ENCODE measurements at regions of chr15 and their contacts with region 1.

Region 1: DNA sequence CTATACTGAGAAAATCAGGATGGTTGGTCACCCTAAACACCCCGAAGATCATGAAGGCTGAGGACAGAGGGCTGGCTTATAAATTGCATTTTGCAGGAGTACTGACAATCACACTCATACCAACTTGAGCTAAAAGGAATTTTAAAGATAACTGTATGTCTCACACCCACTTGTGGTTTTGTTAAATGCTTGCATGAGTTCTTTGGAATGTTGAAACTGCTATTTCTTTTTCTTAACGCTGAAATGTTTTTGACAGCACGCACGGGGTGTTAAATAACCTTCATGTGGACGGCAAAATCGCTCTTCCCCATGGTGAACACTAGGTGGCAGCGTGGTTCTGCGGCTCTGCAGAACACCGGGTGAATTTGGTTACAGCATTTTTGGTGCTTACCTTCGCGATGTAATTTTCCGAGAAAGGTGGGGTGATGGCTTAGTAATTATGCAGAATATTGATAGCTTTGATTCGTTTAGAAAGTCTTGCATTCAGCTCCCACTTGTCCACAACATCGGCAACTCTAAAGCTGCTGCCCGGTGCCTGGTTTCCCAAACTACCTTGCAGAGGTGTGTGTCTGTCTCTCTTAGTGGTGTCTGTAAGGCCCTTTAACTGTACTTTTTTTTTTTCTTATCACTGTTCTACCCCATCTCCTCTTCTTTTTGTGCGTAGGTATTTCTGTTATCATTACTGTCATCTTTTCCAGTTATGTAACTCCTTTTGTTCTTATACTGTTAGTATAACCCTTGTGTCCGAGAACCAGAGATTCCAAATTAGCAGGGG is 51.7 kb downstream of the ARNT2 start:
- DNase-seq: peak in 3 of 10 donors; percentile 65 to 73 (median 71)
- H3K4me3 ChIP-seq: peak overlapping the region in 14 of 59 donors; percentile 0 to 34 (median 18)
- H3K27ac ChIP-seq: peak overlapping the region in 51 of 59 donors; percentile 7 to 84 (median 51)
- H3K27me3 ChIP-seq: no peaks in the 10 kb centered on the region
- CTCF ChIP-seq: peak; percentile 82 to 99 (median 94)

Region 2: DNA sequence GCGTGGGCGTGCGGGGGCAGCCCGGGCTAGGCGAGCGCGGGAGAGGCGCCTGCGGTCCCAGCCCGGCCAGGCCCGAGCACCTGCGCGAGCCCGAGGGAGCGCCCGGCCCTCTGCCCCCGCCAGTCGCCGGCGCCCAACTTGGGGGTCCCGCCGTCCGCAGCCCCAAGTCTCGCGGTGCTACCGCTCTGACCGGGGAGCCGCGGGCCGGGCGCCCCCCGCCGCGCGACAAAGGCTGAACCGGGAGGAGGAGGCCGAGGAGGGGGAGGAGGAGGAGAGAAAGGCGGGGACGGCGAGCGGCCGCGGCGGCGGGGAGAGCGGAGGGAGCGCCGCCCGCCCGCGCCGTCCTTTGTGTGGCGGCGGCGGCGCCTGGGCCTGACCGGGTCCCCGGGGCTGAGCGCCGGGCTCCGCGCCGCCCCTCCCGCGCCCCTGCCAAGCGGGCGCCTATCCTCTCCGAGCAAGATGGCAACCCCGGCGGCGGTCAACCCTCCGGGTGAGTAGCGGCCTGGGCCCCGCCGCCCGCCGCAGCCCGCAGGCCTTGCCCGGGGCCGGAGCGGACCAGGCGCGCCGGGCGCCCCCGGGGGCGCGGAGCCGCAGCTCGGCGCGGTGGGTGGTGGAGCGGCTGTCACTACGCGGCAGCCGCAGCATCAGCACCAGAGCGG is 51.7 kb before region 1 on chr15 and contains the start of gene ARNT2:
- intact Hi-C with region 1: loop called in 1 of 2 experiments (anchors 5 kb)
- DNase-seq: peak in 8 of 10 donors; percentile 37 to 81 (median 60)
- H3K4me3 ChIP-seq: peak within 1 kb of the TSS; percentile 29 to 87 (median 74)
- H3K27ac ChIP-seq: peak within 1 kb of the TSS; percentile 77 to 98 (median 94)
- H3K27me3 ChIP-seq: no peaks in the 10 kb centered on the region
- CTCF ChIP-seq: peak in 2 of 56 donors; percentile 4 to 34
- total RNA-seq, gene ARNT2: 153 to 379 (median 242) TPM

Region 3: GRCh38 chr15:80567721-80568157 is 111.9 kb after region 1 on chr15:
- intact Hi-C with region 1: loop called (anchors 5 kb)
- DNase-seq: peak in 6 of 10 donors; percentile 34 to 79 (median 62)
- H3K4me3 ChIP-seq: no peak overlapping the region
- H3K27ac ChIP-seq: peak overlapping the region in 35 of 59 donors; percentile 2 to 77 (median 42)
- H3K27me3 ChIP-seq: no peaks in the 10 kb centered on the region
- CTCF ChIP-seq: peak; percentile 27 to 83 (median 73)

Region 4: GRCh38 chr15:80695104-80695910 is 239.5 kb after region 1 on chr15 and contains the start of gene ABHD17C:
- intact Hi-C with region 1: loop called in 1 of 2 experiments (anchors 5 kb)
- DNase-seq: peak in 9 of 10 donors; percentile 26 to 78 (median 40)
- H3K4me3 ChIP-seq: peak within 1 kb of the TSS; percentile 59 to 91 (median 79)
- H3K27ac ChIP-seq: peak within 1 kb of the TSS in 52 of 59 donors; percentile 22 to 89 (median 74)
- H3K27me3 ChIP-seq: no peaks in the 10 kb centered on the region
- CTCF ChIP-seq: no peak
- total RNA-seq, gene ABHD17C: 14.5 to 33.2 (median 21.2) TPM

Region 5: DNA sequence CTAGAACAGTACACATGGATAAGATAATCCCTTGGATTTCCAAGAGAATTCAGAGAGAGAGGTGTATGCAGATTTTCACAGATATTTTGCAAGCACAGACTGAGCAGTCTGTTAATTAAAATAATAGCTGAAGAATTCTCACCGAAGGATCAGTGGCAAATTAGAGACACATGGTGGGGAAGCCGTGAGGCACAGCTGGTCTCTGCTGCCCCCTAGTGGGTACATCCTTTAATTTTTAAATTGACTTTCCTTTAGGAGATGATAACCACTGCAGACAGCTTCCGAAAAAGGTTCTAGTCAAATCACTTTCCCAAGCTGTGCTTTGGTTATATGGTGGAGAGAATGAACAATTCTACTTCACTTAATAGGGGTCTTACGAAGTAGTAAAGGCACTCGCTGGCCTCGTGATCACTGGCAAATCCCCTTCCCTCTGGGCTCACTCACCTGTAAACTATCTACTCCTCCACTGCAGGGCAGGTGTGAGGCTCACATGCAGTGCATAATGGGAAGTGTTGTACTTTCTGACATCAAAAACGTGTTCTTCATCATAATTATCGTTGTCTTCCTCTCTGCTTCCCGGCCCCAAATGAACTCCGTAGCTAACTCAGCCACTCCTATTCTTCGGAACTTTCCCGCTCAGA is 514.3 kb after region 1 on chr15:
- intact Hi-C with region 1: loop called (anchors 2 to 5 kb)
- DNase-seq: peak in 6 of 10 donors; percentile 51 to 80 (median 67)
- H3K4me3 ChIP-seq: no peak overlapping the region
- H3K27ac ChIP-seq: no peak overlapping the region
- H3K27me3 ChIP-seq: no peaks in the 10 kb centered on the region
- CTCF ChIP-seq: peak; percentile 80 to 98 (median 92)